Activated naive CD8-positive, alpha-beta T cell treated with anti-CD3 and anti-CD28 coated beads, Interleukin-2, amount 10 ng/mL, durations not matched to agents 7 days and 5 days (primary cell): ENCODE measurements at regions of chr19 and their contacts with region 1.

Region 1: GRCh38 chr19:6767357-6768235 is at the start of gene SH2D3A:
- DNase-seq: peak; percentile 95
- ATAC-seq: peak; percentile 73
- H3K4me3 Mint-ChIP-seq: peak within 1 kb of the TSS; percentile 92
- H3K27ac Mint-ChIP-seq: peak within 1 kb of the TSS; percentile 93
- H3K4me1 Mint-ChIP-seq: peaks cover 42% of the 10 kb centered on the region
- H3K27me3 Mint-ChIP-seq: no peaks in the 10 kb centered on the region
- total RNA-seq, gene SH2D3A: 35.5 to 35.7 TPM

Region 2: DNA sequence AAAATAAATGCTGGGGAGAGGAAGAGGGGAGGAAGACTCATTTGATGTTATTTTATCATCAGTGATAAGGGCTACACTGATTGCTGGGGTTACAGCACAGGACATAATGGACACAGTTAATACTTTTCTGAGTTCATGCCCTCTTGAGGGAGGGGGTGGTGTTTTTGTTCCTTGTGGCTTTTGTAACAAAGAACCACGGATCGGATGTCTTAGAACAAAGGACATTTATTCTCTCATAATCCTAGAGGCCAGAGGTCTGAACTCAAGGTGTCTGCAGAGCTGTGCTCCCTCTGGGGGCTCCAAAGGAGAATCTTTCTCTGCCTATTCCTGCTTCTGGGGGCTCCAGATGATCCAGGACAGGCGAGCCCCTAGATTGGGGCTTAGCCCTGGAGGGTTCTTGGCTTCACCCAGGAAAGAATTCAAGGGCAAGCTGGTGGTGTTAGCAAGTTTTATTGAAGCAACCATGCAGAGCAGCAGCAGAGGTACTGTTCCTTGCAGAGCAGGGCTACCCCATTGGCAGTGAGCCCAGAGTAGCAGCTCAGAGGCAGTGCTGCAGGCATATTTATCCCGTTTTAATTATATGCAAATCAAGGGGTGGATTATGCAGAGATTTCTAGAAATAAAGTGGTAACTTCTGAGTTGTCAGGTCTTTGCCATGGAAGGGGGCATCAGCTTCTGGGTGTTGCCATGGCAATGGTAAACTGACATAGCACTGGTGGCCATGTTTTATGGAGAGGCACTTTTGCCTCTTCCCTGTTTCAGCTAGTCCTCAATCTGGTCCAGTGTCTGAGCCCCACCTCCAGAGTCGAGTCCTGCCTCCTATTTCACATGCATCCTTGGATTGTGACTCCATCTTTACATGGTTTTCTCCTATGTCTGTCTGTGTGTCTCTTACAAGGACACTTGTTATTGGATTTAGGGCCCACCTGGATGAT is 22.9 kb after region 1 on chr19:
- POLR2A ChIA-PET with region 1: interaction called, 11 read pairs
- DNase-seq: no peak
- ATAC-seq: no peak
- H3K4me3 Mint-ChIP-seq: no peak overlapping the region
- H3K27ac Mint-ChIP-seq: no peak overlapping the region
- H3K4me1 Mint-ChIP-seq: peaks cover 48% of the 10 kb centered on the region
- H3K27me3 Mint-ChIP-seq: no peaks in the 10 kb centered on the region

Region 3: DNA sequence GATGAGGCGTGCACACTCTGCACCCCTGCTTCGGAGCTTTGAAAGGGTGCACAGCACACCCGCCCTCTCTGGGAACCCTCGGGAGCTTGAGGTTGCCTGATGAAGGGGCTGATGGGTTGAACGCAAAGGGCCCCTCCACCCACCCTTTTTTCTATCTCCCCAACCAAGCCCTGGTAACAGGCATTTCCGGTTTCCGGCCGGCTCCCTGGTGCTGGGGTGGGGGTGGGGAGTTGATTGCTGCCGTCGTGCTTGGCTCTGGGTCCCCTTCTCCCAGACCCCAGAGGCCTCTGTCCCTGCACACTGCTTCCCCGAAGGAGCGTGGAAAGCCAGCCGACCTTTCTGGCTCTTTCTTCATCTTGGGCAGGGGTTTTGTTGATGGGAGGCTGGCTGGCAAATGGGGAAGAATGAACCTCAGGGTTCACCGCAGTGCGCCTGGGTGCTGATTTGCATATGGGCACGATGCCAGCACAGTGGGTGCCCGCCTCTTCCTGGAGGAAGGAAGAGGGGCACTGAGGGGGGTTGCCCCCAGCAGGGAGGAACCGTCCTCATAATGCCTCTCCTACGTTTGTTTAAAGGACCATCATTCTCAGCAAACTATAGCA is 34.0 kb after region 1 on chr19:
- POLR2A ChIA-PET with region 1: interaction called, 88 read pairs
- DNase-seq: peak; percentile 76
- ATAC-seq: peak; percentile 79
- H3K4me3 Mint-ChIP-seq: peak overlapping the region; percentile 86
- H3K27ac Mint-ChIP-seq: peak overlapping the region; percentile 93
- H3K4me1 Mint-ChIP-seq: peaks cover 50% of the 10 kb centered on the region
- H3K27me3 Mint-ChIP-seq: no peaks in the 10 kb centered on the region